ENCODE measurements at regions of chr4 and their contacts with region 1.

Region 1: GRCh38 chr4:42519803-42520417 is 122.6 kb downstream of the SHISA3 start:
- DNase-seq: peak in 2 of 4 donors; percentile 53 to 72
- ATAC-seq: peak; percentile 77
- H3K4me3 ChIP-seq: no peak overlapping the region
- H3K27ac ChIP-seq: no peak overlapping the region
- H3K4me1 ChIP-seq: no peaks in the 10 kb centered on the region
- H3K27me3 ChIP-seq: no peaks in the 10 kb centered on the region
- CTCF ChIP-seq: peak; percentile 53 to 68

Region 2: GRCh38 chr4:42144028-42144427 is 375.9 kb before region 1 on chr4:
- intact Hi-C with region 1: no loop called
- DNase-seq: no peak
- ATAC-seq: no peak
- H3K4me3 ChIP-seq: no peak overlapping the region
- H3K27ac ChIP-seq: no peak overlapping the region
- H3K4me1 ChIP-seq: no peaks in the 10 kb centered on the region
- H3K27me3 ChIP-seq: peaks cover 5 to 14% of the 10 kb centered on the region in 2 donors
- CTCF ChIP-seq: no peak

Region 3: DNA sequence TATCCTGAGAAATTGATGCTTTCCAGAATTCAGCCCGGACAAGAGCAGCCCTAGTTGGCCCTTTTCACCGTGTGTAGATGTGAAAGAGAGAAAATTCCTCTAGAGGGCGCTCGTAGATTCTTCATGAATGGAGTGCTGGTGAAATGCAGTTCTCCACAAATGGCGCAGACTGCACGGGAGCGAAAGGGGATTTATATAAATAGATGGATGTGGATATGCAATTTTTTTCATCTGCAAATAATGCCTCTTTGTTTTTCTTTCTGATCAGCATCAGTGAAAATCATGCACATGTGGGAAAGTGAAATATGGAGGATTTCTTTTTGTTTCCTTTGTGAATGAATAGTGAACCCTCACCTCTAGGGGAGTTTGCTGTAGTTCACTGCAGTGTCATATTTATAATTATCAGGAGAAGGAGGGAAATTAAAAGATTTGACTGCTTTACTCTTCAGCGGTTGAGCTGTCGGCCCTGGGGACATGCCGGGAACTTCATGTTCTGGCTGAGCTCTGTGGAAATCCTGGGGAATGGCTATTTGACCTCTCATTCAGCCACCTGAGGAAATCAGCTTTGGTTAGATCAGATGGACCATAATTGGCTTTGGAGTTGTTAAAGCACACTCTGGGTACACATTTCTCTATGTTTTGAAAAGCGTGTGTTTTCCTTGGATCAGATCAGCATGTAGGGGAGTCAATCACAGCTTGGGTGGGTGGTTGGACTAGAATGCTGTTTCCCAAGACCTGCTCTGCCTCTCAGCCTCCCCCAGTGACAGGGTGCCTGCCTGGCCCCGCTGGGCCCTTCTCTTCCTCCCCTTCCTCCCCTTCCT is 237.6 kb before region 1 on chr4:
- intact Hi-C with region 1: loop called in 1 of 2 experiments (anchors 5 kb)
- DNase-seq: peak in 2 of 4 donors; percentile 79 to 86
- ATAC-seq: peak; percentile 98
- H3K4me3 ChIP-seq: no peak overlapping the region
- H3K27ac ChIP-seq: no peak overlapping the region
- H3K4me1 ChIP-seq: no peaks in the 10 kb centered on the region
- H3K27me3 ChIP-seq: no peaks in the 10 kb centered on the region
- CTCF ChIP-seq: peak; percentile 68 to 70

Region 4: GRCh38 chr4:42371306-42372252 is 148.3 kb before region 1 on chr4:
- intact Hi-C with region 1: loop called in 1 of 2 experiments (anchors 5 kb)
- DNase-seq: peak in 2 of 4 donors; percentile 54 to 69
- ATAC-seq: peak; percentile 76
- H3K4me3 ChIP-seq: no peak overlapping the region
- H3K27ac ChIP-seq: no peak overlapping the region
- H3K4me1 ChIP-seq: no peaks in the 10 kb centered on the region
- H3K27me3 ChIP-seq: no peaks in the 10 kb centered on the region
- CTCF ChIP-seq: peak in 1 of 2 donors; percentile 30

Region 5: DNA sequence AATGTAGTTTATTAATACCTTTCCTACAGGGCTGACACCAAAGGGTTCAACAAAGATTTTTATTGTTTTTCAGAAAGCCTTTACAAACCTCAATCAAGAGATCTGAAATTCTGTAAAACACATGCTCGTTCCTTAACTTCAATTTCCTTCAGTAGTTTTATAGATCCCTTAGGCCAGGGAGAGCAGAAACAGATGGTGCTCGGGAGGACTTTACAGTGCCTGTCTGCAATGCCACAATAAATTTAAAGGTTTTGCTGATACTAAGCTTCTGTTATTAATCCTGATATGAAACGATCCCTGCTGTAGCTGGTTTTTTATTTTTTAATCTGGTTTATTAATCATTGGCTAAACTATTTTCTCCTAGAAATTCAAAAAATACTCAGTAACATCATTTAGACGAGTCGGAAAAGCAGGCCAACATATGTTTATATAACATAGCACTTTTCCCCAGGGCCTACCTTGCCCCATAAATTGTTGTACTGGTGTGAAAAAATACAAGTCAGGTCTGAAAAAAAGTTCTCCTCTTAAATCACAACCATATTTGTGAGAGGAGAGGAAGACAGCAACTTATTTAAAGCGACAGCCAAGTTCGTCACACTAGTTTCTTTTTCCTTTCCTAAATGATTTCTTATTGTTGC is 82.9 kb before region 1 on chr4:
- intact Hi-C with region 1: no loop called
- DNase-seq: no peak
- ATAC-seq: no peak
- H3K4me3 ChIP-seq: no peak overlapping the region
- H3K27ac ChIP-seq: no peak overlapping the region
- H3K4me1 ChIP-seq: no peaks in the 10 kb centered on the region
- H3K27me3 ChIP-seq: no peaks in the 10 kb centered on the region
- CTCF ChIP-seq: no peak

Measured in left lung (tissue), 14 donors.